ENCODE measurements at regions of chr10 and their contacts with region 1.

Region 1: GRCh38 chr10:3811291-3811870 is 26.4 kb upstream of the KLF6 start:
- DNase-seq: peak; percentile 82
- H3K4me3 Mint-ChIP-seq: peak overlapping the region; percentile 59
- H3K27ac Mint-ChIP-seq: no peak overlapping the region
- H3K4me1 Mint-ChIP-seq: peaks cover 86% of the 10 kb centered on the region
- H3K27me3 Mint-ChIP-seq: no peaks in the 10 kb centered on the region

Region 2: DNA sequence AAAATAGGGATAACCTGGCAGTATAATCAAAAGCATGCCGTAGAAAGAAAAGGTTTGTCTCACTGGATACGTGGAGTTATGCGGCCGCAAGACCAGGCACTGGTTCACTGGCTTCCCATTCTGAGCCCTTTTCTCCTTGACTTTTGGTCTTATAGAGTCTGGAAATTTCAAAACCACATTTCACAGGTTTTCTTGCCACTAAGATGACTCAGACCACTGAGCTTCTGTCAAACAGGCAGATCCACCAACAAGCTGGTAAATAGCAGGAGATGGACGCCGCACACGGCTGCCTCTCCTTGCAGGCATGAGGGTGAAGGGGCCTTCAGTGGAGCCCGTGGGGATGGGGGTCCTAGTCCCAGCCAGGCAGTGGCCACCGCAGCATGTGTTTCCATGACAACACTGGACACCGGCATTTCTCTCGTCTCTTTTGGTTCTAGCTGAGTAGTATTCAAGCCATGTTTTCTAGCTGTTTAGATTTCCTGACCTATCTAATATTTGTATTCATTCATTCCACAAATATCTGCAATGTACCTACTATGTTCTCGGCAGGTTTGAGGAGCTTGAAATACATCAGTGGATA is 81.9 kb before region 1 on chr10:
- CTCF ChIA-PET with region 1: no interaction called
- POLR2A ChIA-PET with region 1: no interaction called
- intact Hi-C with region 1: no loop called
- DNase-seq: no peak
- H3K4me3 Mint-ChIP-seq: no peak overlapping the region
- H3K27ac Mint-ChIP-seq: no peak overlapping the region
- H3K4me1 Mint-ChIP-seq: peaks cover 2% of the 10 kb centered on the region
- H3K27me3 Mint-ChIP-seq: no peaks in the 10 kb centered on the region

Region 3: GRCh38 chr10:3740157-3740871 is 71.1 kb before region 1 on chr10:
- CTCF ChIA-PET with region 1: interaction called, 4 read pairs
- POLR2A ChIA-PET with region 1: interaction called, 9 read pairs
- intact Hi-C with region 1: loop called (anchors 1 kb)
- DNase-seq: peak; percentile 57
- H3K4me3 Mint-ChIP-seq: peak overlapping the region; percentile 43
- H3K27ac Mint-ChIP-seq: peak overlapping the region; percentile 82
- H3K4me1 Mint-ChIP-seq: peaks cover 28% of the 10 kb centered on the region
- H3K27me3 Mint-ChIP-seq: no peaks in the 10 kb centered on the region

Region 4: DNA sequence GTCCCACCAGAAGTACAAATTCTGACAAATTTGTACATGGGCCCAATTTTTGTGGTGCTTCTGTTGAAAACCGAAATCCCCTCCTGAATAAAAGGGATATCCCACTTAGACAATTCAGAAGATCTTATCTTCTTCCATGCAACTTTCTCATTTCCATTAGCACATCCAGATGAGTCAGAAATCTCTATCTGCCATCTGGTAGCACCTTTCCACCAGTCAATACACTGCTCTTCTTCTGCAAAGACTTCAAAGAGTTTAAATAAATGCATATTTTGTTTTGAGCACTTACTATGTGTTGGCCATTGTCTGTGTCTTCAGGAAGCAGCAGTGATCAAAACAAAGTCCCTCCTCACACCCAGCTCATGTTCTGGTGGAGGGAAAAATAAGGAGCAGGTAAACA is 13.6 kb before region 1 on chr10:
- CTCF ChIA-PET with region 1: no interaction called
- POLR2A ChIA-PET with region 1: interaction called, 11 read pairs
- intact Hi-C with region 1: no loop called
- DNase-seq: no peak
- H3K4me3 Mint-ChIP-seq: no peak overlapping the region
- H3K27ac Mint-ChIP-seq: peak overlapping the region; percentile 68
- H3K4me1 Mint-ChIP-seq: peaks cover 60% of the 10 kb centered on the region
- H3K27me3 Mint-ChIP-seq: no peaks in the 10 kb centered on the region

Region 5: DNA sequence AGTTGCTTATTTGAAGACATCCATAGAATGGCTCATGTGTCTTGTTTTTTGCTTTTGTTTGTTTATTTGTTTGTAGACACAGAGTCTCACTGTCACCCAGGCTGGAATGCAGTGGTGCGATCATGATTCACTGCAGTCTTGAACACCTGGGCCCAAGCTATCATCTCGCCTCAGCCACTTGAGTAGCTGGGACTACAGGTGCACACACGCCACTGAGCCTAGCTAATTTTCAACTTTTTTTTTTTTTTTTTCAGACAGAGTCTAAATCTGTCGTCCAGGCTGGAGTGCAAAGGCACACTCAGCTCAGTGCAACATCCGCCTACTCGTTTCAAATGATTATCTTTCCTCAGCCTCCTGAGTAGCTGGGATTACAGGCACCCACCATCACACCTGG is 56.9 kb after region 1 on chr10:
- CTCF ChIA-PET with region 1: interaction called, 6 read pairs
- POLR2A ChIA-PET with region 1: interaction called, 82 read pairs
- intact Hi-C with region 1: loop called (anchors 1 kb)
- DNase-seq: no peak
- H3K4me3 Mint-ChIP-seq: no peak overlapping the region
- H3K27ac Mint-ChIP-seq: peak overlapping the region; percentile 93
- H3K4me1 Mint-ChIP-seq: peaks cover 76% of the 10 kb centered on the region
- H3K27me3 Mint-ChIP-seq: no peaks in the 10 kb centered on the region

Region 6: DNA sequence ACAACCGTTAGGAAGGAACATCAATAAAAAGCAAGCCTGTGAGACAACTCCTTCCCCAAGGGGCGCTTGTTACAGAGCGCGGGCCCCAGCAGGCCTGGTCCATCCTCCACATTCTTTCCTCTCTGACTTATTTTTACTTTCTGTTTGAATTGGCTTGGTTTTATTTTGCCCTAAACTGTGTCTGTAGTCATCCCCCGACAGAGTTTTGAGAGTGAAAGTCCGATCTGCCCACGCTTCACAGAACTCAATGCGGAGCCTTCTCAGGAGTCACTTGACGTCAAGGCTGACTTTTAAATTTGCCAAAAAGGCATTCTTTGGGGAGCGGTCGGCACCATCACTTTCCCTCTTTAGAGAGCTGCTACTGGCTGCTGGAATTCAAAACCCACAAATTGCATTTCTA is 123.8 kb after region 1 on chr10:
- CTCF ChIA-PET with region 1: no interaction called
- POLR2A ChIA-PET with region 1: interaction called, 14 read pairs
- intact Hi-C with region 1: loop called (anchors 1 kb)
- DNase-seq: peak; percentile 95
- H3K4me3 Mint-ChIP-seq: peak overlapping the region; percentile 42
- H3K27ac Mint-ChIP-seq: peak overlapping the region; percentile 92
- H3K4me1 Mint-ChIP-seq: peaks cover 49% of the 10 kb centered on the region
- H3K27me3 Mint-ChIP-seq: no peaks in the 10 kb centered on the region

Region 7: GRCh38 chr10:4656576-4657182 is 845.3 kb after region 1 on chr10:
- CTCF ChIA-PET with region 1: interaction called, 4 read pairs
- POLR2A ChIA-PET with region 1: no interaction called
- intact Hi-C with region 1: loop called (anchors 2 kb)
- DNase-seq: peak; percentile 63
- H3K4me3 Mint-ChIP-seq: no peak overlapping the region
- H3K27ac Mint-ChIP-seq: no peak overlapping the region
- H3K4me1 Mint-ChIP-seq: peaks cover 16% of the 10 kb centered on the region
- H3K27me3 Mint-ChIP-seq: peaks cover 6% of the 10 kb centered on the region